ENCODE measurements at regions of chr16 and their contacts with region 1.

Region 1: DNA sequence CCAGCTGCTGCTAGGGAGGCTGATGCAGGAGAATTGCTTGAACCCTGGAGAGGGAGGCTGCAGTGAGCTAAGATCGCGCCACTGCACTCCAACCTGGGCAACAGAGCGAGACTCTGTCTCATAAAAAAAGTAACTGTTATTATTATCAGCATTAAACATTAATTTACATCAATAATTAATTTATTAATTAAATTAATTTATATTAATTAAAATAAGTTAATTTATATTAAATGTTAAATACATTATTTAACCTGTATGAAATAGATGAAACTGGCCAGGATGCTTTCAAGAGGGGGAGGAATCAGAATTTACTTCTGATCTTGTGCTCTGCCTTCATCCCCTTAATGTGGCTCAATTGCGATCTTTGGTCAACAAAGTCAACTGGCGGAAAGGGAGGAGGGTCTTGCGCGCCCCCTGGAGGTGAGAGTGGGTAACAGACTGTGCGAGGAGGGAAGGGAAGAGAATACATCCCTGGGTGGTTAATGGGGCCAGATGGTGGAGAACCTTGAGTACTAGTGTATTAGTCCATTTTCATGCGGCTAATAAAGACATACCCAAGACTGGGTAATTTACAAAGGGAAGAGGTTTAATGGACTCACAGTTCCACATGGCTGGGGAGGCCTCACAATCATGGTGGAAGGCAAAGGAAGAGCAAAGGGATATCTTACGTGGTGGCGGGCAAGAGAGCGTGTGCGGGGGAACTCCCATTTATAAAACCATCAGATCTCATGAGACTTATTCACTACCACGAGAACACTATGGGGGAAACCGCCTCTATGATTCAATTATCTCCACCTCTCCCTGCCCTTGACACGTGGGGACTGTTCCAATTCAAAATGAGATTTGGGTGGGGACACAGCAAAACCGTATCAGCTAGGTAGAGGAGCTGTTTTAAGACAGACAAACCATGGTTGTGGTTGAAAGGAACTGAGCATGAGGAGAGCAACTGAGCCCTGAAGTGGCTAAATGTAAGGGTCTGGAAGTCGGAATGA is 15.7 kb upstream of the CPPED1 start:
- DNase-seq: peak; percentile 56 to 69
- H3K4me3 ChIP-seq: no peak overlapping the region
- H3K27ac ChIP-seq: no peak overlapping the region
- H3K4me1 ChIP-seq: peaks cover 0 to 28% of the 10 kb centered on the region in 2 donors
- H3K27me3 ChIP-seq: no peaks in the 10 kb centered on the region
- CTCF ChIP-seq: peak; percentile 61 to 88 (median 79)
- POLR2A ChIP-seq: no peak

Region 2: DNA sequence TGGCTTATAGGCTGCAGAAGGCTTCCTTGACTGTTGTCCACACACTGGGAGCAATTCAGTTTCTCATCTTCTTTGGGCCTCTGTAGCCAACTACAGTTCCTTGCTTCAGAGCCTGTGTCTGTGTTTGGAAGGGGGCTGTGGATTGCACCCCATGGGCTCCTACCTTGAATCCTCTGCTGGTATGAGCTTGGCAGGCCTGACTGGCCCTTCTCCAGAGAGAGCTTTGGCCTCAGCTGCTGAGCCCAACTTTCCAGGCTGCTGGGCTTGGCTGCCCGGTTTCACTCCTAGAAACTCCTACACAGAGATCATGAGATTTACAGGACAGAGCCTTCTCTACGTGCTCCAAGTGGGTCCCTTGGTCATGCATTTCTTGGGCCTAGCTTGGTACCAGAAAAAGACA is 488.5 kb before region 1 on chr16:
- intact Hi-C with region 1: loop called (anchors 10 kb)
- DNase-seq: peak; percentile 72 to 80
- H3K4me3 ChIP-seq: no peak overlapping the region
- H3K27ac ChIP-seq: peak overlapping the region; percentile 8 to 50 (median 9)
- H3K4me1 ChIP-seq: peaks cover 31 to 37% of the 10 kb centered on the region in 2 donors
- H3K27me3 ChIP-seq: no peaks in the 10 kb centered on the region
- CTCF ChIP-seq: no peak
- POLR2A ChIP-seq: no peak

Region 3: GRCh38 chr16:12455287-12455798 is 364.1 kb before region 1 on chr16:
- intact Hi-C with region 1: loop called (anchors 10 kb)
- DNase-seq: peak; percentile 72 to 79
- H3K4me3 ChIP-seq: no peak overlapping the region
- H3K27ac ChIP-seq: no peak overlapping the region
- H3K4me1 ChIP-seq: no peaks in the 10 kb centered on the region
- H3K27me3 ChIP-seq: no peaks in the 10 kb centered on the region
- CTCF ChIP-seq: peak; percentile 74 to 94 (median 89)
- POLR2A ChIP-seq: no peak

Region 4: GRCh38 chr16:12850186-12850585 is 30.8 kb after region 1 on chr16:
- intact Hi-C with region 1: no loop called
- DNase-seq: no peak
- H3K4me3 ChIP-seq: no peak overlapping the region
- H3K27ac ChIP-seq: no peak overlapping the region
- H3K4me1 ChIP-seq: no peaks in the 10 kb centered on the region
- H3K27me3 ChIP-seq: no peaks in the 10 kb centered on the region
- CTCF ChIP-seq: no peak
- POLR2A ChIP-seq: no peak

Measured in thyroid gland (tissue), 4 donors.